Dorsolateral prefrontal cortex (tissue), 120 donors: ENCODE measurements at regions of chr7 and their contacts with region 1.

Region 1: DNA sequence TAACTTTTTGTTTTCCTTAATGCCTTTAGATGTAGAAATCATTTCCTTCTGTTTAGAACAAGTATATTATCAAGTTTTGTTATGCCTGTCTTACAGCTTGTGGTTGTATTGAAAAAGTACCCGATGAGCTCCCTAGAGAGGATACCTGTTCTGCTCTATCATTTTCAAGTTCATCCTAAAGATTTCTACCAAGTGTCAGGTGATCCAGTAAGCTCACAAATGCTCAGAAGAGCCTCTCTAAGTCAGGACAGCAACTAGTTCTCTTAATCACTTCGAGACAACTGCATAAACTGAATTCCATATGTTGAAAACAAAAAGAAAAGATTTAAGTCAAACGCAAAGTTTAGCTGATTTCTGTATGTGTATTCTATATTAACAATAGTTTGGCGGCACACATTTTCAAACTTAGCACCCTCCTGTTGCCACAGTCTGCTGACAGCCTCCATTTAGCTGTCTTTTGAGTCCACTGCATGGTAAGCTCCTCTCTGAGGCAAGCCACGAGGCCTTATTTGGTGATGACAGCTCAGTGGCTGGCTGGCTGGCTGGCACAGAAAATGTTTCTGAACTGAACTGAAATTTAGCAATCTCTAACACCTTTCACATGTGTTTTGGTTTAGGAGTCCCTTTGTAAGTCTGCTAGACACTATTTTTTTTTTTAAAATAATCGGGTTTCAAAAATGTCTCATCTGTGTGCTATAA is 59.4 kb downstream of the SEMA3C start:
- DNase-seq: peak in 1 of 10 donors; percentile 29
- H3K4me3 ChIP-seq: no peak overlapping the region
- H3K27ac ChIP-seq: peak overlapping the region in 3 of 59 donors; percentile 13 to 26 (median 23)
- H3K27me3 ChIP-seq: no peaks in the 10 kb centered on the region
- CTCF ChIP-seq: no peak

Region 2: GRCh38 chr7:80848841-80849240 is 10.6 kb before region 1 on chr7:
- intact Hi-C with region 1: loop called in 1 of 2 experiments (anchors 1 kb)
- DNase-seq: no peak
- H3K4me3 ChIP-seq: no peak overlapping the region
- H3K27ac ChIP-seq: no peak overlapping the region
- H3K27me3 ChIP-seq: no peaks in the 10 kb centered on the region
- CTCF ChIP-seq: no peak

Region 3: DNA sequence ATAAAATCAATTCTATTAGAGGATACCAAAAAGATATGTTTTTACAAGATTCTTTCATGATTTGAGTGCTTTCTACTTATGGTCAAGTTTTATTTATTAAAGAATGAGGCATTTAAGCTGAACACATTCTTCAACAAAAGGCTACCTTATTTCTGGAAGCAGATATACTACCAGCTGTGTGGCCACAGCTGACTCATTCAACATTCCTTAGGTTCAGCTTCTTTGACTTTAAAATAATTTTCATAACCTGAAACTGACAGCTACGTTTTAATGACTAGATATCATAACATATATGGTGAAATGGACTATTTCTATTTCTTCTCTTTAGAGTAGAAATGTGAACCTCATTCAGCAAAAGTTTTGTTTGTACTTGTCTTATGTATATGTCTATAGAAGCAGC is 473.6 kb after region 1 on chr7:
- intact Hi-C with region 1: no loop called
- DNase-seq: no peak
- H3K4me3 ChIP-seq: no peak overlapping the region
- H3K27ac ChIP-seq: no peak overlapping the region
- H3K27me3 ChIP-seq: peaks cover 0 to 5% (median 0%) of the 10 kb centered on the region in 45 donors
- CTCF ChIP-seq: no peak